HEK293 (cell line): ENCODE measurements at regions of chr6 and their contacts with region 1.

Region 1: DNA sequence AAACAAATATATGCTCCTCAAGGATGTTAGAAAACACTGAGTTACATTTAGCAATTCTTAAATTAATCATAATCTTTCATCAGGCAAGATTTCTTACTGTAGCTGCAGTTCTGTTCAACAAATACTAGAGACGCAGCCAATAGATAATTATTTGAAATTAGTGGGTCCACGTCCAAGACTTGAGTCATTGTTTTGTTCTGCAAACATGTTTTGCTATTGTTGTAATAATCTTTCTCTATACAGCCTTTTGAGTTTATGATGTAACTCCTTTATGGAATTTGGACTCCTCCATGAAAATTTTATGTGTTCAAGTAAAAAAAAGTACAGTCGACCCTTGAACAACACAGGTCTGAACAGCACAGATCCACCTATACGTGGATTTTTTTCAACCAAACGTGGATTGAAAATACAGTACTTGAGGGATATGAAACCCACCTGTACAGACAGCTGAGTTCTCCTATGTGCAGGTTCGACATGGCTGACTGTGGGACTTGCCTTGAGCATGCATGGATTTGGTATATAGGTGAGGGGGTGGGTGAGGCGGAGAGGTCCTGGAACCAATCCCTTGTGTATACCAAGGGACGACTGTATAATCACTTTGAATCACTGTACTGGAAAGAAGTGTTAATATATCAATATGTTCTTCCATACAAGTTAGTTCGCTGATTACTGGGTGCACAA is 41.3 kb upstream of the SLC22A16 start:
- H3K4me3 ChIP-seq: no peak overlapping the region
- H3K27ac ChIP-seq: no peak overlapping the region
- H3K4me1 ChIP-seq: peaks cover 8% of the 10 kb centered on the region
- CTCF ChIP-seq: no peak

Region 2: DNA sequence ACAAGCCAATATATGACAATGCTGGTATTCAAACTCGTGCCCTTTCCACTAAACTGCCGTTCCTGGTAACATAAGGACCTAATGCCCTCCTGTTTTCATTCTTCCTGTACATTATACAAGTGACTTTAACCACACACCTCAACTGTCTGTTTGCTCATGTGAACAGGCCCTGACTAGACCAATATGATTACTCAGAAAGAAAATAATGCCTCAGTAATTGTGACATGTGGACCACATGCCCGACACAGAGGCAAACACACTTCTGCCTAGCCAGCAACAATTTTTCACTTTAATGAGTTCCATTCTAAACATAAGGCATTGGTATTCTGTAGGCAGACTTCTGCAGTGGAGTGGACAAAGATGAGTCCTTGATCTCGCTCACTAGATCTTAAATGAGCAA is 71.3 kb before region 1 on chr6:
- CTCF ChIA-PET with region 1: no interaction called
- POLR2A ChIA-PET with region 1: no interaction called
- H3K4me3 ChIP-seq: no peak overlapping the region
- H3K27ac ChIP-seq: no peak overlapping the region
- H3K4me1 ChIP-seq: no peaks in the 10 kb centered on the region
- CTCF ChIP-seq: no peak

Region 3: GRCh38 chr6:110484310-110484709 is 33.4 kb before region 1 on chr6:
- CTCF ChIA-PET with region 1: interaction called, 11 read pairs
- POLR2A ChIA-PET with region 1: no interaction called
- H3K4me3 ChIP-seq: no peak overlapping the region
- H3K27ac ChIP-seq: no peak overlapping the region
- H3K4me1 ChIP-seq: no peaks in the 10 kb centered on the region
- CTCF ChIP-seq: no peak

Region 4: DNA sequence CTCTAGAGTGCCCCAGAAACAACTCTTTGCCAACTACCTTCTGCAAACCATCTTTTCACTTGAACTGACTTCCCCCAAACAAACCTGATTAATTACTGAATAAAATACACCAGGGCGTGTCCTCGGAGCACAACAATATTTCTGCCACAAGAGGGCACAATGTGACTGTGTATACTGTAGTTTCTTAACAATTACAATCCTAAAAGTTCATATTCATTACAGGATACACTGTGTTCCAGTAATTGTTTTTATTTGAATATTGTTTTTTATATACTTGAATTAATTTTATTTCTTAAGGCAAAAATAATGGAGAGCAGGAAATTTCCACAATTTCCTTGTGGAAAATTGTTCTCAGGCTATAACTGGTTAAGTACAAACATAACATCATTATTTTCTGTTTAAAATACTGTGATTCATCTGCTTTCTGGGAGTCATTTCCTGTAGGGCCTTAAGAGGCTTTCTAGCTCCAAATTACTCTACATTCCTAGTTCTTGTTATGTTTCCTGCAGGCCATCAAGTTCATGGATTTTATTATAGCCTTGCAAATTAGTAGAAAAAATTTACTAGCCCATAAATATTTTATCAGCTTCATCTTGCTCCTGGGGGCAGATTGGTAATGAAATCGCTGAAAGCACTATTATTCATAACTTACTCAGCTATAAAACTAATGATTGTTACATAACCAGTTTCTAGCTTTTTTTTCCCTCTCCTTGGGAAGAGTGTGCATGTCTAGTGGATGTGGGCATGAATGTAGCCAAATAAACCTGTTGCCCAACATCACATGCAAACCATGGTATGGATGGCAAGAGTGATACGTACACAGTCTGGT is 10.6 kb after region 1 on chr6:
- CTCF ChIA-PET with region 1: interaction called, 26 read pairs
- POLR2A ChIA-PET with region 1: no interaction called
- H3K4me3 ChIP-seq: no peak overlapping the region
- H3K27ac ChIP-seq: no peak overlapping the region
- H3K4me1 ChIP-seq: peaks cover 8% of the 10 kb centered on the region
- CTCF ChIP-seq: peak; percentile 60; the same call in 1 of the 2 replicates